Activated CD4-positive, alpha-beta T cell treated with anti-CD3 and anti-CD28 coated beads for 36 hours (primary cell): ENCODE measurements at regions of chr19 and their contacts with region 1.

Region 1: DNA sequence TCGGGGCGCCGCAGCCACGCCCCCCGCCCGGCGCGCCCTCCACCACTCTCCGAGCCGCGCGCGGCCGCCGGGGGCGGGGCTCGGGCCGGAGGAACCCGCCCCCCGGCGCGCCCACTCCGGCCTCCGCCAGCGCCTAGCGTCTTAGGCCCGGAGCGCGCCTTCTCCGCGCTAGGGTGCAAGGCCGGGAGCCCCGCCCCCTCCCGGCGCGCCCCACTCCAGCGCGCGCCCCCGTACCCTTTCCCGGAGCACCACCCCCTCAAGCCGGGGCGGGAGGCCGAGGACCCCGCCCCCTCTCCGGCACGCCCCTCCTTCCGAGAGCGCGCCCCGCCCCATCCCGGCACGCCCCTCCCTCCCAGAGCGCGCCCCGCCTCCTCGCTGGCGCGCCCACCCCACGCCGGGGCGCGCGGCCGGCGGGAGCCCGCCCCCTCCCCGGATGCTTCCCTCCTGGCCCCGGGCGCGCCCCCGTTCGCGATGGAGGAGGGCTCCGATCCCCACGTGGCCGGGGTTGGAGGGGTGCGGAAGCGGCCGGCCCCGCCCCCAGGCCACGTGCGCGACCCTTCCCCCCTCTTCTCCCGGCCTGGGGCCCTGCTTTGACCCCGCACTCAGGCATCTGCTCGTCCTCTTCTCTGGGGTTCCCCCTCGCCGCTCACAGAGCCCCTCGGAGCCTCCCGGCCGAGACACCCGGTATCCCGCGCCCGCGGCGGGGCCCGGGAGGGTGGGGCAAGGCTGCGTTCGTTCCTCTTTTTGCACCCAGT is 524 bp upstream of the KLF16 start:
- DNase-seq: peak; percentile 97
- ATAC-seq: peak; percentile 75
- H3K4me3 Mint-ChIP-seq: peak overlapping the region; percentile 68
- H3K27ac Mint-ChIP-seq: peak overlapping the region; percentile 72
- H3K4me1 Mint-ChIP-seq: peaks cover 37% of the 10 kb centered on the region
- H3K27me3 Mint-ChIP-seq: no peaks in the 10 kb centered on the region

Region 2: DNA sequence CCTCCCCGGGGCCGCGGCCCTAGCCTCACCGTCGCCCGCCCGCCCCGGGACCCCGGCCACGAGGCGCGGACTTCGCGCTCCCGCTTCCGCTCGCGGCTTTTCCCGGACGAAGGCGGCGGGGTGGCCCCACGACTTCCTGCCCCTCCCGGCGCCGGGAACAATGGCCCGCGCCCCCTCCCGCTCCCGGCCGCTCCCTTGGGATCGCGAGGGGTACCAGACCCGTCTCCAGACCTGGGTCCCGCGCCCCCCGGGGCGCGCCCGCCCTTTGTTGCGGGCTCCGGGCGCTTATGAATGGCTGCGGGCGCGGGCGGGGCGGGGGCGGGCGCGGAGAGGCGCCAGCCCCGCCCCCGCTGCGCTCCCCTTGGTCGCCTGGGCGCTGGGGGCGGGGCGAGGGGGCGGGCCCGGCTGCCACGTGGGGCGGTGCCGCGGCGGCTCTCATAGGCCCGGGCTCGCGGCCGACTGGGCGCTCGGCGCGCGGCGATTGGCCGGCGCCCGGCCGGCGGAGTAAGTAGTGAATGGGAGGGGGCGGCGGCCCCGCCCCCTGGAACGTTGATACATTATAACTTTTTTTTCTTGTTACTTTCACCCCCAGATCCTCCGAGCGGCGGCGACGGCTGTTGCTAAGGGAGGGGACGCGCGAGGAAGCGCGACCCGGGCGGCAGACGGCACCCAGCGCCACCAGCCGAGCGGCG is 614.5 kb before region 1 on chr19:
- CTCF ChIA-PET with region 1: no interaction called
- POLR2A ChIA-PET with region 1: no interaction called
- intact Hi-C with region 1: loop called in 1 of 2 experiments (anchors 1 kb)
- DNase-seq: peak; percentile 97
- ATAC-seq: peak; percentile 53
- H3K4me3 Mint-ChIP-seq: peak overlapping the region; percentile 73
- H3K27ac Mint-ChIP-seq: no peak overlapping the region
- H3K4me1 Mint-ChIP-seq: peaks cover 9% of the 10 kb centered on the region
- H3K27me3 Mint-ChIP-seq: no peaks in the 10 kb centered on the region

Region 3: DNA sequence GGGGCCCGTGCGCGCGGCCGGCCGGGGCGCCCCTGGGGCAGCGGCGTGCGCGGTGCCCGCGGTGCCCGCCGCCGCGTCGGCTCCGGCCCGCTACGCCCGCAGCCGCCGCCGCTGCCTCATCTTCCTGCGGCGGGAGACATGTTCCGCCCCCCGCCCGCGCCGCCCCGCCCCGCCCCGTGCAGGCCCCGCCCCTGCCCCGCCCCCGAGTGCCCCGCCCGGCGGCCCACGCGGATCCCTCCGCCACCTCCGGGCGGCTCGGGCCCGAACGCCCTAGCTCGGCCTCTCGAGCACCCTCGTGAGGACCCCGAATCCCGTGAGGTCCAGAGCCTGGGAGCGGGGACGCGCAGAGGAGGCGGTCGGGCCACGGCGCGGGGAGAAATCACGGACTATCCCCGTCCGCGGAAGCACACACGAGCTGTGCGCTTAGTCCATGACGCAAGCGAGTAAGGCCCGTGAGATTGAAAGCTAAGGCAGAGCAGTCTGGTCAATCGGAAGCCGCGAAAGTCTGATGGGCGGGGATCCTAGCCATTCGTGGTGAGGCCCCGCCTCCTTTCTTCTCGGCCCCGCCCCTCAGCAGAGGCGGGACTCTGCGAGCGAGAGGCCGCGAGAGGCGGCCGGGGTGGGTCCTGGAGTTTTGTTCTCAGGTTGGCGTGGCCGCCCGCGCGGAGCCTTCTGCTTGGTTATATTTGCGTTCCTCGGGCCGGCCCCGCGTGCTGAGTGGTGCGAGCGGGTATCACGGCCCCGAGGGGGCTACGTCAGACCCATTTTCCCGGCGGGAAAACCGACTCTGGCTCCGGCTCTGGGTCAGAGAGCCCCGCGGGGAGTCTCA is 211.2 kb before region 1 on chr19 and contains the start of gene TCF3:
- CTCF ChIA-PET with region 1: no interaction called
- POLR2A ChIA-PET with region 1: no interaction called
- intact Hi-C with region 1: loop called in 1 of 2 experiments (anchors 1 kb)
- DNase-seq: peak; percentile 99
- ATAC-seq: peak; percentile 94
- H3K4me3 Mint-ChIP-seq: peak within 1 kb of the TSS; percentile 88
- H3K27ac Mint-ChIP-seq: peak within 1 kb of the TSS; percentile 91
- H3K4me1 Mint-ChIP-seq: peaks cover 32% of the 10 kb centered on the region
- H3K27me3 Mint-ChIP-seq: no peaks in the 10 kb centered on the region
- total RNA-seq, gene TCF3: 115 to 133 TPM

Region 4: DNA sequence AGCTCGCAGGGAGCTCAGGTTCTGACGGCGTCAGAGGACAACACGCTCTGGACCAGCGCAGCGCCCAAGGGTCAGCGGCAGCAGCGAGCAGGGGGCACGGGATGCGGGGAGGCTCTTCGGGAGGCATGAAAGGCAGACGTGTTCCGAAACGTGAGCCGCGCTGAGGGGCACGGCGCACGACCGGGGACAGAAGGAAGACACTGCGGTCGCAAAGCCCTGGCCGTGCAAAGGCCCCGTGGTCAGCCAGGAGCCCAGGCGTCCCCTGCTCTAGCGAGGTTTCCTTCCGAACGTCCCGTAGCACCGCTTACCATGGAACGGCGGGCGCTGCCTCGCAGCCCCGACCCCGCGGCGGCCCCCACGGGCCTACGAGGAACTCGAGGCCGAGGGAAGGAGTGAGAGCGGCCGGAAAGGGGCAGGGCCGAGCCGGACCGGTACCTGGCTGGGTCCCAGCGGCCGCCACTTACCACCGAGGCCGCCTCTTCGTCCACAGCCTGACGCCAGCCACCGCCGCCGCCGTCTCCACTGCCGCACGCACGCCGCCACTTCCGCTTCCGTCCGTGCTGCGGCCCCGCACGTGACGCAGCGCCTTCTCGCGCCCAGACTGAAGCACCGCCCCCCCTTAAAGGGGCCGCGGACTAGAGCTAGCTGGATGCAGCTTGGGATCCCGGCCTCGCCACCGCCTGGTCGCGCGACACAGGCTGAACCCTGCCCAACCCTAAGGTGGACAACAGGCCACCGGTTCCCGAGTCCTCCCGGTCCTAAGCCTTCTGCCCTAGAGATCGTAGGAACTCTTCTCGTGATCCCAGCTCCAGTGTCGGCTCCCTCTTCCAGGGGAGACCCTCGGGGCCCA is 12.0 kb after region 1 on chr19:
- CTCF ChIA-PET with region 1: interaction called, 8 read pairs
- POLR2A ChIA-PET with region 1: interaction called, 4 read pairs
- intact Hi-C with region 1: loop called in 1 of 2 experiments (anchors 1 kb)
- DNase-seq: peak; percentile 95
- ATAC-seq: peak; percentile 96
- H3K4me3 Mint-ChIP-seq: peak overlapping the region; percentile 92
- H3K27ac Mint-ChIP-seq: peak overlapping the region; percentile 97
- H3K4me1 Mint-ChIP-seq: peaks cover 20% of the 10 kb centered on the region
- H3K27me3 Mint-ChIP-seq: no peaks in the 10 kb centered on the region

Region 5: GRCh38 chr19:2041683-2042484 is 178.0 kb after region 1 on chr19:
- CTCF ChIA-PET with region 1: no interaction called
- POLR2A ChIA-PET with region 1: no interaction called
- intact Hi-C with region 1: loop called in 1 of 2 experiments (anchors 2 kb)
- DNase-seq: peak; percentile 100
- ATAC-seq: peak; percentile 88
- H3K4me3 Mint-ChIP-seq: peak overlapping the region; percentile 73
- H3K27ac Mint-ChIP-seq: peak overlapping the region; percentile 88
- H3K4me1 Mint-ChIP-seq: peaks cover 17% of the 10 kb centered on the region
- H3K27me3 Mint-ChIP-seq: no peaks in the 10 kb centered on the region

Region 6: GRCh38 chr19:2269244-2269947 is 405.5 kb after region 1 on chr19:
- CTCF ChIA-PET with region 1: no interaction called
- POLR2A ChIA-PET with region 1: no interaction called
- intact Hi-C with region 1: loop called in 1 of 2 experiments (anchors 1 kb)
- DNase-seq: peak; percentile 99
- ATAC-seq: peak; percentile 81
- H3K4me3 Mint-ChIP-seq: peak overlapping the region; percentile 89
- H3K27ac Mint-ChIP-seq: peak overlapping the region; percentile 88
- H3K4me1 Mint-ChIP-seq: peaks cover 38% of the 10 kb centered on the region
- H3K27me3 Mint-ChIP-seq: no peaks in the 10 kb centered on the region